AG04449 (cell line): ENCODE measurements at regions of chr2 and their contacts with region 1.

Region 1: GRCh38 chr2:101831351-101831865 is 133.9 kb downstream of the MAP4K4 start:
- DNase-seq: no peak
- H3K4me3 ChIP-seq: no peak overlapping the region
- CTCF ChIP-seq: peak; percentile 84

Region 2: GRCh38 chr2:101410716-101411211 is 420.6 kb before region 1 on chr2:
- CTCF ChIA-PET with region 1: interaction called, 123 read pairs
- POLR2A ChIA-PET with region 1: no interaction called
- DNase-seq: no peak
- H3K4me3 ChIP-seq: no peak overlapping the region
- CTCF ChIP-seq: no peak

Region 3: DNA sequence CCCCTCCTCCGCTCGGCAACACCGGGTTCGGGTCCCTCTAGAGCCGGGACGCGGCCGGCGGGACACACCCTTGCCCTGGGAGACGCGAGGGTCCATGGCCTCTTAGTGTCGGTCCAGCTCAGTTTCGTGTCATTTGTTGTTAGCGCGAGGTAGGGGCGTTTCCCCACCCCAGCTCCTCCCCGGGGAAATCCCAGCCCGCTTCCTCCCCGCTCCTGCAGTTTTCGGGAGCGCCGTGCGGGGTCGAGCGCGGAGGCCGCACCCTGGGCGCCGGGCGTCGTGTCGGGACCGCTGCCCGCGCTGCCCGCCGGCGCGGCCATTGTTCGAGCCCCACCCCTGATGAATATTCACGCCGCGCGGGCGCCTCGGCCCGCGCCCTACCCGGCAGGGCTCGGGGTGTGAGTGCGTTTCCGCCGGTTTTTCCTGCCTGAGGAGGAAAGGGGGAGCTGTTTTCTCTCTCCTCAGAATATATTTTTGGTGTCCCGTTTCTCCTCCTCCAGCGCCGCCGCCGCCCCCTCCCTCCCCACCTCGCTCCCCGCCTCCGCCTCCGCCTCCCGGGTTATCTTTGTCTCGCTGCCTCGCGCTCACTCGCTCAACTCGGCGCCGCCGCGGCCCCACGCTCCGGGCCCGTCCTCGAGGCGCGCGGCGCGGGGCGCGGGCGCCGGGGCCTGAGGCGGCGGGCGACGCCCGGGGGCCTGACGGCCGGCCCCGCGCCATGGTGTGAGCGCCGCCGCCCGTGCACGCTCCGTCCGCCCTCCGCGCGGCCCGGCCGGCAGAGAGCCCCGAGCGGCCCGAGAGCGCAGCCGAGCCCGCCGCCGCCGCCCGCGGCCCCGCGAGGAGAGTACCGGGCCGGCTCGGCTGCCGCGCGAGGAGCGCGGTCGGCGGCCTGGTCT is 134.0 kb before region 1 on chr2 and contains the start of gene MAP4K4:
- CTCF ChIA-PET with region 1: interaction called, 53 read pairs
- POLR2A ChIA-PET with region 1: interaction called, 6 read pairs
- DNase-seq: peak; percentile 24
- H3K4me3 ChIP-seq: peak within 1 kb of the TSS; percentile 83
- CTCF ChIP-seq: peak; percentile 16

Region 4: DNA sequence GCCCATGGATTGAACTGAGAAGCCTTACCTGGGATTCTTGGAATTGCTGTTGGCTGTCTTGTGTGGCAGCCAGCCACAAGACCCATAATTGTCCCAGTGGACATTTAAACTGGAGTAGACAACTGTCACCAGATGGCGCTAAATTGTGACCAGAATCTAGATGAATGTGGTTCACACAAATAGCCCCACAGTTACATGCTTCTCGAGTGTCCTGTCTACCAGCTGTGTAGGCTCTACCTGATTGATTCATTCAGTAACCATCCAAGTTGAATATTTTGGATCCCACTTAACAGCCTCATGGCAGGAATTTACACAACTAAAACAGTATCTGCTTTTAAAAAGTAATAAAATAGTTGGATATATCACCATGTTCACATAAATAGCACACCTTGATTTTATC is 60.7 kb before region 1 on chr2:
- CTCF ChIA-PET with region 1: interaction called, 127 read pairs
- POLR2A ChIA-PET with region 1: no interaction called
- DNase-seq: no peak
- H3K4me3 ChIP-seq: no peak overlapping the region
- CTCF ChIP-seq: peak; percentile 16

Region 5: DNA sequence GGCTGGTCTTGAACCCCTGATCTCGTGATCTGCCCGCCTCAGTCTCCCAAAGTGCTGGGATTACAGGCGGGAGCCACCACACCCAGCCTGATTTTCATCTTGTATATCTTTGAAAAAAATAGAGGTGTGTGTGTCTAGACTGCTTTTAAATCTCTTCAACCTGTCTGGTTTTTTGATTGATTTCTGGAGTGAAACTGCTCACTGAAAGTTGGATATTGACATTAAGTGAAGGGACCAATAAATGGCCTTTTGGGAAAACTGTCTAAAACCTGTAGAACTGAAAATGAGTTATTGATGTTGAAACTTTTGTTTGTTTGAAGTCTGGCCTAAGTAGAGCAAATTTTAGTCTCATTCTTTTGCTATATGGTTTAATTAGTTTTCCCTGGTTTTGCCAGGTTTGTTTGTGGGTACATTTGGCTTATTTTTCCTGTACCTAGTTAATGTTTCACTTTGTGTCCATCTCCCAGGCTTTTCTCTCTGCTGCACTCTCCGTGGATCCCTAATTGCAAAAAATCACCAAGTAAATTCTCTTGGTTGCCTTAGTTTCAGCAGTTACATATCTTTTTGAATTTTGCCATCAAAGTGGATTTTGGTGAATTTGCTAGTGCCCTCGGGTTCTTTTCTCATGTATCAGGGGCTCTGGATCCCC is 10.4 kb after region 1 on chr2:
- CTCF ChIA-PET with region 1: interaction called, 26 read pairs
- POLR2A ChIA-PET with region 1: no interaction called
- DNase-seq: no peak
- H3K4me3 ChIP-seq: no peak overlapping the region
- CTCF ChIP-seq: no peak

Region 6: DNA sequence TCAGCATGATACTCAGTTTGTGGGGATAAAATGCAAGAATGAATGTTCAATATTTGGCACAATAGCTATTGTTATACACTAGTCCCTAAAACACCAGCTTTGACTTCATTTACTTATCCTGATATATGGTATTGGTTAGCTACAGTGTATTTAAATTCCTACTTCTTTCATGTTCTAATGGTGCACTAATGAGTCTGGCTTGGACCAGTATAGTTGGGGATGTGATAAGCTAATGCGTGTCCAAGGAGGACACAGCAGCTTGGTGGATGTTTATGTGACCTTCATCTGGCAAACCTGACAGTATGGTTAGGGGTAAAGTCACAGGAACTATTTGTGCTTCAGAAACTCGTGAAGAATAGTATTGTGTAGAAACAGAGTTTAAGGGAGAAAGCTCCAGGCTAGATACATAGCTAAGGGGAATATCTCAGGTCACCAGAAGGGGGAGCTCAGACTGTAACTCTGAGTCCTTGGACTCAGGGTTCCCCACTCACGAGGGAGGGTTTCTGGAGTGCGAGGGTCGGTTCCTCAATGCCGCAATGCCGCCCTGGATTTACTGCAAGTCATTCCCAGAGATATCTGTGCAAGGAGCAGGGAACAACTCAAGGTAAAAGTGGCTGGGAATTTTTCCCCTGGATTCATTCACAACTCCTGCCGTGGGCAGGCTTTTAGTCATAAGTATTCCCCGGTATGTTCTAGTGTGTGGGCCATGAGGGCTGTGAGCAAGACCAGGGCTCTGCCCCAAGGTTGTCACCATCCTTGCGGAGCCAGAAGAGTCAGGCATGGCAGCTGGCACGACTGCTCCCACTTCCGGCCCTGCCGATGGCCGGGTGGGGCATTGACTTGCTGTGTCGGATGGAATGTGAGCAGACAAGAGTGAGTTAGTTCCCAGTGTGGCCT is 174.8 kb after region 1 on chr2:
- CTCF ChIA-PET with region 1: no interaction called
- POLR2A ChIA-PET with region 1: no interaction called
- DNase-seq: no peak
- H3K4me3 ChIP-seq: no peak overlapping the region
- CTCF ChIP-seq: peak; percentile 64

Region 7: DNA sequence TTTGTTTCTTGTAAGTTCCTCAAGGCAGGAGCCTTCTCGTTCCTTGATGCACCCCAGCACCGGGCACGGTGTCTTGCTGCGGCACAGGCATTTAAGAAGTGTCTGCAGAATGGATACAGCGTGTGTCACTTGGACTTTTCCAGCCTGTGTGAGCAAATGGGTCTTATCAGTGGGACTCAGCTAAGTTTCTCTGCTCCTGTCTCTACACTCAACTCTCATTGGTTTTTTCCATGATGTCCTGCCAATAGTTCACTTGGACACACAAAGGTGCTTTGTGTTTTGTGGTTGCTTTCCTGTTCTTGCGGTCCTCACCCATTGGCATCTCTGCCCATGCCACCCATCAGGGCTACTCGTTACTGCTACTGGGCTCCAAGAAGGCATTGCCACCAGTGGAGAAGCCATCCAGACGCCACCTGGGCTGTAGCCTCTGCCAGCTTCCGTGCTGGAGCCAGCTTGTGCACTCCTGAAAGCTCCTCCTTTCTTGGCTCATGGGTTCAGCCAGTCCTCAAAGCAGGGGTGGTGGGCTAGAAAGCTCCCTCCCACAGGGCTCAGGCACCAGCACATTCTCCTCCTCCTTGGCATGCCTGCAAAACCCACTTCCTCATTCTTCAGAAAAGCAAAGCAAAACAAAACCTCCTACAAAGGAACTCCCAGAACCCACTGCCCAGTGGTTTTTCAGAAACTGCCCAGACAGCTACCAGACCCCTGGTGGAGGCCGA is 201.8 kb after region 1 on chr2:
- CTCF ChIA-PET with region 1: no interaction called
- POLR2A ChIA-PET with region 1: no interaction called
- DNase-seq: no peak
- H3K4me3 ChIP-seq: no peak overlapping the region
- CTCF ChIP-seq: no peak

Region 8: DNA sequence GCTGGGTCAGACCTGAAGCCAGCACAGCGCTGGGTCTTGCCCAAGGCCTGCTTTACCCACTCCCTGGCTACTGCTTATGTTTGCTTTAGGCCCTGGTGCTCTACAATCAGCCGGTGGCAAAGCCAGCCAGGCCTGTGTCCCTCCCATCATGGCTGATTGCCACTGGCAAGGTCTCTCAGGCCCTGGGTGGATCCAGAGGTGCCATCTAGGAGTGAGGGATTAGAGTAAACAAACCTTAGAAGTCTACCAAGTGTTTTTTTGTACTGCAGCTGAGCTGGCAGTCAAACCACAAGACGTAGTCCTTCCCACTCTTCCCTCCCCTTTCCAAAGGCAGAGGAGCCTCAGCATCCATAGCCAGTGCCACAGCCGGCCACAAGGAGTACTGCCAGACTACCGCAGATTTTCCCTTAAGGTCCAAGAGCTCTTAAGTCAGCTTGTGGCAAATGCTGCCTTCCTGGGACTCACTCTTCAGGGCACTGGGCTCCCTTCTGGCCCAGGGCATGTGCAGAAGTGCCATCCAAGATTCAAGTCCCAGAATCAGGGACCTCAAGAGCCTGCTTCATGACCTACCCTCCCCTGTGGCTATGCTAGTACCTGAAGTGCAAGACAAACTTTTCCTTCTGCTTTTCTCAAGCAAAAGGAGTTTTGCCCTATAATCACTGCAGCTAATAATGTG is 375.4 kb after region 1 on chr2:
- CTCF ChIA-PET with region 1: no interaction called
- POLR2A ChIA-PET with region 1: no interaction called
- DNase-seq: no peak
- H3K4me3 ChIP-seq: no peak overlapping the region
- CTCF ChIP-seq: no peak